PC-3 (cell line): ENCODE measurements at regions of chr5 and their contacts with region 1.

Region 1: DNA sequence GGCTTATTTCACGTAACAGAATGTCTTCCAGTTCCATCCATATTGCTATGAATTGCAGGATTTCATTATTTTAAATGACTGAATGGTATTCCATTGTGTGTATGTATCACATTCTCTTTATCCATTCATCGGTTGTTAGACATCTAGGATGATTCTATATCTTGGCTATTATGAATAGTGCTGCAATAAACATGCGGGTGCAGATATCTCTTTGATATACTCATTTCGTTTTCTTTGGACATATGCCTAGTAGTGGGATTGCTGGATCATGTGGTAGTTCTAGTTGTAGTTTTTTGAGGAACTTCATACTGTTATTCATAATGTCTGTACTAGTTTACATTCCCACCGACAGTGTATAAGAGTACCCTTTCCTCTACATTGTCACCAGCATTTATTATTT is 460.5 kb downstream of the MAN2A1 start:
- DNase-seq: peak; percentile 28
- ATAC-seq: no peak
- H3K4me3 ChIP-seq: no peak overlapping the region
- H3K27ac ChIP-seq: no peak overlapping the region
- H3K4me1 ChIP-seq: no peaks in the 10 kb centered on the region
- H3K27me3 ChIP-seq: no peaks in the 10 kb centered on the region; the same call in 1 of the 2 replicates
- CTCF ChIP-seq: no peak

Region 2: GRCh38 chr5:110115487-110115886 is 34.7 kb before region 1 on chr5:
- CTCF ChIA-PET with region 1: no interaction called
- POLR2A ChIA-PET with region 1: no interaction called
- intact Hi-C with region 1: loop called (anchors 2 kb)
- DNase-seq: peak; percentile 84
- ATAC-seq: peak; percentile 86
- H3K4me3 ChIP-seq: no peak overlapping the region
- H3K27ac ChIP-seq: 0 out of 2 replicates have a peak overlapping the region, but pooled peaks have one; percentile 9
- H3K4me1 ChIP-seq: peaks cover 12% of the 10 kb centered on the region
- H3K27me3 ChIP-seq: no peaks in the 10 kb centered on the region
- CTCF ChIP-seq: no peak

Region 3: GRCh38 chr5:110251366-110251765 is 101.2 kb after region 1 on chr5:
- CTCF ChIA-PET with region 1: no interaction called
- POLR2A ChIA-PET with region 1: no interaction called
- intact Hi-C with region 1: no loop called
- DNase-seq: peak; percentile 3
- ATAC-seq: no peak
- H3K4me3 ChIP-seq: no peak overlapping the region
- H3K27ac ChIP-seq: no peak overlapping the region
- H3K4me1 ChIP-seq: no peaks in the 10 kb centered on the region
- H3K27me3 ChIP-seq: no peaks in the 10 kb centered on the region
- CTCF ChIP-seq: no peak